ENCODE measurements at regions of chr7 and their contacts with region 1.

Region 1: DNA sequence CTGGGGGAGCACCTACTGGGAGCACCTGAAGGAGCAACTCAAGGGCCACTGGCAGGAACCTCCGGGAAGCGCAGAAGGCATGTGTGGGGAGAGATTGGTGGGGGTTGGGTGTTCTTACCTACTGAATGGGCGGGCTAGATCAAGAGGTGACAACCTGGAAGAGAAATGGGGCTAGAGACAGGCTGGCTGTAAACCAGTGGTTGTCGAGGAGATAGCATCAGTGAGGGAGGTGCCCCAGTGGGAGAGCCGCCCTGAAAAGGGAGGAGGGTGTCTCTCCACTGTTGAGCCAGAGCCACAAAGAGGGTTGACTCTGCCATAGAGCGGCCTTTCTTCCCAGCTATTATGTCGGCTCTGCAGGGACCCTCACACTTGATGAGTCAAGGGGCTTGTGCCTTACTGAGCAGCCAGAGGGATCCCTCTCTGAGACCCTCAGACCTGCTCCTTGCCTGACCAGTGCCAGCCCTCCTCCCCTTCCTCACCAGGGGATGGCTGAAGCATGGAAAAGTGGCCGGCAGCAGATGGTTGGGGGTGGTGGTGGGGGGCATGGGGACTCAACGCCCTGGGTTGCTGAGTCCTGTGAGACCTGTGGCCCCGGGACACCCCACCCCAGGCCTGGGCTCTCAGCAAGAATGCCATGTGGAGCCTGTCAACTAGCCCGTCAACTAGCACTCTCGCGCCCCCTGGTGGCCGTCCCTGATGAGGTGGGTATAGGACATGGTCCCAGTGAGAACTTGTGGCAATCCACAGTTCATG is 36.5 kb upstream of the PURB start:
- DNase-seq: peak; percentile 44
- H3K4me3 ChIP-seq: no peak overlapping the region
- H3K27ac ChIP-seq: no peak overlapping the region
- H3K4me1 ChIP-seq: no peaks in the 10 kb centered on the region
- H3K27me3 ChIP-seq: peaks cover 2% of the 10 kb centered on the region
- CTCF ChIP-seq: peak; percentile 73 to 90

Region 2: GRCh38 chr7:44587843-44588711 is 333.7 kb before region 1 on chr7:
- CTCF ChIA-PET with region 1: no interaction called
- dilution Hi-C with region 1: no loop called
- in situ Hi-C with region 1: no loop called
- intact Hi-C with region 1: loop called (anchors 1 kb)
- DNase-seq: peak; percentile 51
- H3K4me3 ChIP-seq: no peak overlapping the region
- H3K27ac ChIP-seq: no peak overlapping the region
- H3K4me1 ChIP-seq: peaks cover under 1% of the 10 kb centered on the region
- H3K27me3 ChIP-seq: no peaks in the 10 kb centered on the region
- CTCF ChIP-seq: peak; percentile 54 to 71

Region 3: GRCh38 chr7:44858161-44858560 is 63.6 kb before region 1 on chr7:
- CTCF ChIA-PET with region 1: no interaction called
- dilution Hi-C with region 1: no loop called
- in situ Hi-C with region 1: loop called (anchors 5 to 10 kb)
- intact Hi-C with region 1: loop called (anchors 1 kb)
- DNase-seq: no peak
- H3K4me3 ChIP-seq: no peak overlapping the region
- H3K27ac ChIP-seq: no peak overlapping the region
- H3K4me1 ChIP-seq: peaks cover 4% of the 10 kb centered on the region
- H3K27me3 ChIP-seq: no peaks in the 10 kb centered on the region
- CTCF ChIP-seq: no peak

Region 4: DNA sequence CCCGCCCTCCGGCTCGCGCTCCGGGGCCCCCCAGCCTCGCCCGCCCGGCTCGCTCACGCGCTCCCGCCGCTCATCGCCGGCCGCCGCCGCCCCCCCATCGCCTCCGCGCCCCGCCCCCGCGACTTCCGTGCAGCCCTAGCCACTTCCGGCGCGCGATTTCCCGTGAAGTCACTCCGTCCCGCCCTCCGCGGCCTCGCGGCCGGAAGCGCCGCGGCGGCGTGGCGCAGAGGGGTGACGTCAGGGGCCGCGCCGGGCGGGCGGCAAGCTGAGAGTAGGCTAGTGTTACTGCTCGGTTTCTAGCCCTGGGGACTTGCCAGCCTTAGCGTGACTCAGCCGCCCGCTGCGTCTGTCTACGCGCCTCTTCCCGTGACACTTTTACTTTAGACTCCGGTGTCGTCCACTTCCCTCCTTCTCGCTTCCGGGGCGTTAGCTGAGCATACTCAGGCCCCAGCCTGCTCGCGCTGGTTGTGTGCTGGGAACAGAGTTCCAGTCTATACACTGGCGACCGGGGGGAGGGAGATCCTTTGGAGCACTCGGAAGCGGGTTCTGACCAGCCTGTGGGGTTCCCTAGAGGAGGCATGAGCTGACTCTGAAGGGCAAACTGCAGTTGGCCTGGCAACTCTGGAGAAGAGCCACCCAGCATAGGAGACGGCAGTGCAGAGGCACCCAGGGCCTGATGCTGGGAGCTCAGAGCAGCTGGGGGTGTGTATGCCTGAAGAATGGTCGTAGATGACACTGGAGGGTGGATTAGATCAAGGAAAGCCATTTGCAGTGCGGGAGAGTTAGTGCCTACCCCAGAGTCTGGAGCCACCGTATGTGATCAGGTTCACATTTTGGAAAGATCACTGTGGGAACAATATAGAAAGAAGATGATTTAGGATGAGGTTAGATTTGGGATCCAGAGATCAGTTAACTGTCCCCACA is 36.1 kb before region 1 on chr7 and contains the start of gene PURB:
- CTCF ChIA-PET with region 1: no interaction called
- dilution Hi-C with region 1: no loop called
- in situ Hi-C with region 1: no loop called
- intact Hi-C with region 1: loop called (anchors 2 kb)
- DNase-seq: peak; percentile 99
- H3K4me3 ChIP-seq: peak within 1 kb of the TSS; percentile 69 to 94 (median 84)
- H3K27ac ChIP-seq: peak within 1 kb of the TSS; percentile 97
- H3K4me1 ChIP-seq: peaks cover 30% of the 10 kb centered on the region
- H3K27me3 ChIP-seq: no peaks in the 10 kb centered on the region
- CTCF ChIP-seq: no peak
- total RNA-seq, gene PURB: 30.2 to 32.8 TPM

Measured in mammary epithelial cell (primary cell).